Activated CD8-positive, alpha-beta T cell treated with anti-CD3 and anti-CD28 coated beads, Interleukin-2, amount 10 ng/mL, durations not matched to agents 7 days and 5 days (primary cell): ENCODE measurements at regions of chr17 and their contacts with region 1.

Region 1: DNA sequence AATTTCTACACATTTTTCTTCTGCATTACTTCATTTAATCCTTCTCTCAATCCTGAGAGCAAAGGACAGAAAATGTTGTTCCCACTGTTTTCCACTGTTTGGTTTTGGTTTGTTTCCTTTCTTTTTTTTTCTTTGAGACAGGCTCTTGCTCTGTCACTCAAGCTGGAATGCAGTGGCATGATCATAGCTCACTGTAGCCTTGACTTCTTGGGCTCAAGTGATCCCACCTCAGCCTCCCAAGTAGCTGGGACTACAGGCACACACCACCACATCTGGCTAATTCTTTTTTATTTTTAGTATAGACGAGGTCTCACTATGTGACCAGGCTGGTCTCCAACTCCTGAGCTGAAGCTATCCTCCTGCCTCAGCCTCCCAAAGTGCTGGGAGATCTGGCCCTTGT is 7.0 kb upstream of the ZNF652 start:
- DNase-seq: no peak
- ATAC-seq: no peak
- H3K4me3 Mint-ChIP-seq: no peak overlapping the region
- H3K27ac Mint-ChIP-seq: no peak overlapping the region
- H3K4me1 Mint-ChIP-seq: peaks cover 23% of the 10 kb centered on the region
- H3K27me3 Mint-ChIP-seq: no peaks in the 10 kb centered on the region

Region 2: DNA sequence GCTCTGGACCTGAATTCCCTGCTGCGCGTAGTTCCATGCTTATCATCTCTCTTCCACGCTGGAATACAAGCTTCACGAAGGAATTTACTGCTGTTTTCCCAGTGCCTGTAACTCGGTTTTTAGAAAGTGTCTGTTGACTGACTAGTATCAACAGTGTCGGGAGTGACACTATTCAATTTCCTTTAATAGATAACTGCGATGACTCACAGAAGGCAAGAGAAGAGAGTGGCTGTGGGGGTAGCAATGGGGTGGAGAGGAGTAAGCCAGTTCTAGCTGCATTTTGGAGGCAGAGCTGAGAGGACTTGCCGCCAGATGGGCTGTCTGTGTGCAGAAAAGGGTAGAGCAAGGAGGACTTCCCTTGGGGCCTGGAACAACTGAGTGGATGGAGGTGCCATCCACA is 211.3 kb before region 1 on chr17:
- CTCF ChIA-PET with region 1: no interaction called
- POLR2A ChIA-PET with region 1: no interaction called
- DNase-seq: no peak
- ATAC-seq: no peak
- H3K4me3 Mint-ChIP-seq: no peak overlapping the region
- H3K27ac Mint-ChIP-seq: no peak overlapping the region
- H3K4me1 Mint-ChIP-seq: no peaks in the 10 kb centered on the region
- H3K27me3 Mint-ChIP-seq: peaks cover 21% of the 10 kb centered on the region

Region 3: GRCh38 chr17:49327835-49328784 is 41.0 kb before region 1 on chr17:
- CTCF ChIA-PET with region 1: interaction called, 11 read pairs
- POLR2A ChIA-PET with region 1: no interaction called
- DNase-seq: no peak
- ATAC-seq: no peak
- H3K4me3 Mint-ChIP-seq: no peak overlapping the region
- H3K27ac Mint-ChIP-seq: peak overlapping the region; percentile 30
- H3K4me1 Mint-ChIP-seq: peaks cover 40% of the 10 kb centered on the region
- H3K27me3 Mint-ChIP-seq: no peaks in the 10 kb centered on the region

Region 4: GRCh38 chr17:49337884-49338283 is 31.2 kb before region 1 on chr17:
- CTCF ChIA-PET with region 1: interaction called, 38 read pairs
- POLR2A ChIA-PET with region 1: no interaction called
- DNase-seq: no peak
- ATAC-seq: no peak
- H3K4me3 Mint-ChIP-seq: no peak overlapping the region
- H3K27ac Mint-ChIP-seq: no peak overlapping the region
- H3K4me1 Mint-ChIP-seq: peaks cover 52% of the 10 kb centered on the region
- H3K27me3 Mint-ChIP-seq: no peaks in the 10 kb centered on the region

Region 5: GRCh38 chr17:49343273-49343672 is 25.8 kb before region 1 on chr17:
- CTCF ChIA-PET with region 1: interaction called, 38 read pairs
- POLR2A ChIA-PET with region 1: no interaction called
- DNase-seq: no peak
- ATAC-seq: peak; percentile 50
- H3K4me3 Mint-ChIP-seq: peak overlapping the region; percentile 72
- H3K27ac Mint-ChIP-seq: peak overlapping the region; percentile 71
- H3K4me1 Mint-ChIP-seq: peaks cover 71% of the 10 kb centered on the region
- H3K27me3 Mint-ChIP-seq: no peaks in the 10 kb centered on the region

Region 6: GRCh38 chr17:49381063-49381462 is 12.0 kb after region 1 on chr17:
- CTCF ChIA-PET with region 1: interaction called, 60 read pairs
- POLR2A ChIA-PET with region 1: no interaction called
- DNase-seq: no peak
- ATAC-seq: no peak
- H3K4me3 Mint-ChIP-seq: no peak overlapping the region
- H3K27ac Mint-ChIP-seq: no peak overlapping the region
- H3K4me1 Mint-ChIP-seq: peaks cover 7% of the 10 kb centered on the region
- H3K27me3 Mint-ChIP-seq: no peaks in the 10 kb centered on the region

Region 7: GRCh38 chr17:49390548-49391324 is 21.6 kb after region 1 on chr17:
- CTCF ChIA-PET with region 1: interaction called, 60 read pairs
- POLR2A ChIA-PET with region 1: no interaction called
- DNase-seq: no peak
- ATAC-seq: no peak
- H3K4me3 Mint-ChIP-seq: peak overlapping the region; percentile 37
- H3K27ac Mint-ChIP-seq: peak overlapping the region; percentile 94
- H3K4me1 Mint-ChIP-seq: peaks cover 71% of the 10 kb centered on the region
- H3K27me3 Mint-ChIP-seq: no peaks in the 10 kb centered on the region